BJ (cell line): ENCODE measurements at regions of chr7 and their contacts with region 1.

Region 1: GRCh38 chr7:5237286-5237685 is 45.5 kb upstream of the SLC29A4 start:
- DNase-seq: peak; percentile 26
- H3K4me3 ChIP-seq: no peak overlapping the region; the same call in 1 of the 2 replicates
- H3K27me3 ChIP-seq: no peaks in the 10 kb centered on the region
- CTCF ChIP-seq: no peak

Region 2: DNA sequence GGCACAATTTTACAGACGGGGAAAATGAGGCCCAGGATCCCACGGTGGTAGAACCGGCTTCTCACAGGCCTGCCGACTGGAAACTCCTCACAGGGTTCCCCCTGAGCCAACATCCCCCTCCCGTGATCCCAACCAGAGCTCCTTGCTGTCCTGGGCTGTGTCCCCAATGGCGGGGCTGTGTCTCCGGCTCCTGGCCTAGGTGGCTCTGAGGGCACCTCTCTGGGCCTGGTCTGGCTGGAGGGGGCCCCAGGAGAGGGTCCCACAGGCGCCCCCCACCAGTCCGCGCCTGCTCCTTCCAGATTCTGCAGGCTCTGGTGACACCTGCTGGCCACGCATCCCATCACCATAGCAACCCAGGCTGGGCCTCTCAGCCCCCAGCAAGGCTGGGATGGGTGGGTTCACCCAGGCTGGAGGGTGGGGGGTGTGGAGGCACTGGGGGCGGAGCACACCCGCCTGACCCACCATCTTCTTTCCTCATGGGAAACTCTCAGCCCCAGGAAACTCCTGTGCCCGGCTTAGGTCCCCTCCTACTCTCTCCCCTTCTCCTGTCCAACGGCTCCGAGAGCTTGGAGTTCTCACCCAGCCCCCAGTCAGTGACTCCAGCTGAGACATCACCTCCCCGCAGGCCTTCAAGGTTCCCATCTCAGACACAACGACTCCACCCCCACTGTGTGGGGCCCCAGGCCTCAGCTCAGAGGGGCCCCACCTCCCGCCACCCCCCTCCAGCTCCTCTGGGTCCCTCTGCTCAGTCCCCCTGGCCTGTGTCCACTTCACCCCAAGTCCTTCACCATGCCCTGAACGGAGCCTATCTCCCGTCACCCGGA is 213.5 kb after region 1 on chr7:
- CTCF ChIA-PET with region 1: interaction called, 33 read pairs
- POLR2A ChIA-PET with region 1: no interaction called
- DNase-seq: no peak
- H3K4me3 ChIP-seq: no peak overlapping the region
- H3K27me3 ChIP-seq: no peaks in the 10 kb centered on the region
- CTCF ChIP-seq: peak; percentile 59

Region 3: DNA sequence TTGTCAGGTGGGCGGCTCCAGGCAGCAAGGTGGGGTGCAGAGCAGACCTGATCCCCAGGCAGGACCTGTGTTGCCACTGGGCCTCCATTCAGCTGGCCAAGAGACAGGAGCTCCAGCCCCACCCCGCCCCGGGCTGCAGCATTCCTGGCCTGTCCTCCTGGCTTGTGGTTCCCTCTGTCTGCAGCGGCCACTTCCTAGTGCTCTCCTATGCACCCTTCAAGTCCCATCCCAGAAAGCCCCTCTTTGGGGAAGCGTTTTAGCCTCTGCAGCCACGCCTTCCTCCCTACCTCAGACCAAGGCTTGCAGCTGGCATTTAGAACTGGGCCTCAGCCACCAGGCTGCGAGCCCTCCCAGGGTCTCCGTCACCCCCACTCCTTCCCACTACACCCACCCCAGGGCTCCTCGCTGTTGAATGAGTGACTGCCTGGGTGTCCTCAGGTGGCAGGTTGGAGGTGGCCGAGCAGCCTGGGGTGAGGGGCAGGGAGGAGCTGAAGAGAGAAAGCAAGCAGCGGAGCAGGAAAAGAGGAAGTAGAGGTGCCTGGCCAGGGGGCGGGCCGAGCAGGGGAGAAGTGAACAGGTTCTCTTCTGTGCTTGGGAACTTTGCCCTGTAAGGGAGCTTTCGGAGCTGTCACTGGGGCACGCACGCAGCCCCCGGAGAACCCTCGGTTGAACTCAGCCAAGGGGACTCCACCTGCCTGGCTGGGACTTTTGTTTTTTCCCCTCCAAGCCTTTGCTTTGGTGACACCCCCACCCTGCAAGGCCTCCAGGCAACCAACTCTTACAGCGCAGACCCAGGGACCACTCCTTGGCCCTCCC is 295.4 kb after region 1 on chr7:
- CTCF ChIA-PET with region 1: no interaction called
- POLR2A ChIA-PET with region 1: no interaction called
- DNase-seq: no peak
- H3K4me3 ChIP-seq: no peak overlapping the region
- H3K27me3 ChIP-seq: no peaks in the 10 kb centered on the region
- CTCF ChIP-seq: no peak

Region 4: GRCh38 chr7:5620459-5620881 is 383.2 kb after region 1 on chr7:
- CTCF ChIA-PET with region 1: no interaction called
- POLR2A ChIA-PET with region 1: no interaction called
- DNase-seq: no peak
- H3K4me3 ChIP-seq: no peak overlapping the region
- H3K27me3 ChIP-seq: no peaks in the 10 kb centered on the region
- CTCF ChIP-seq: no peak

Region 5: GRCh38 chr7:5755704-5756504 is 518.6 kb after region 1 on chr7:
- CTCF ChIA-PET with region 1: no interaction called
- POLR2A ChIA-PET with region 1: no interaction called
- DNase-seq: peak; percentile 16
- H3K4me3 ChIP-seq: no peak overlapping the region
- H3K27me3 ChIP-seq: no peaks in the 10 kb centered on the region
- CTCF ChIP-seq: no peak